PC-3 (cell line): ENCODE measurements at regions of chr4 and their contacts with region 1.

Region 1: GRCh38 chr4:76511947-76512346 is 76.9 kb downstream of the SHROOM3 start:
- DNase-seq: no peak
- ATAC-seq: no peak
- H3K4me3 ChIP-seq: no peak overlapping the region
- H3K27ac ChIP-seq: no peak overlapping the region
- H3K4me1 ChIP-seq: peaks cover 5% of the 10 kb centered on the region; the same call in 1 of the 2 replicates
- H3K27me3 ChIP-seq: no peaks in the 10 kb centered on the region
- CTCF ChIP-seq: no peak

Region 2: GRCh38 chr4:76550966-76551780 is 39.2 kb after region 1 on chr4:
- CTCF ChIA-PET with region 1: no interaction called
- POLR2A ChIA-PET with region 1: no interaction called
- intact Hi-C with region 1: loop called (anchors 2 kb)
- DNase-seq: peak; percentile 70
- ATAC-seq: peak; percentile 61
- H3K4me3 ChIP-seq: no peak overlapping the region
- H3K27ac ChIP-seq: peak overlapping the region; percentile 69
- H3K4me1 ChIP-seq: peaks cover 23% of the 10 kb centered on the region
- H3K27me3 ChIP-seq: no peaks in the 10 kb centered on the region
- CTCF ChIP-seq: no peak

Region 3: DNA sequence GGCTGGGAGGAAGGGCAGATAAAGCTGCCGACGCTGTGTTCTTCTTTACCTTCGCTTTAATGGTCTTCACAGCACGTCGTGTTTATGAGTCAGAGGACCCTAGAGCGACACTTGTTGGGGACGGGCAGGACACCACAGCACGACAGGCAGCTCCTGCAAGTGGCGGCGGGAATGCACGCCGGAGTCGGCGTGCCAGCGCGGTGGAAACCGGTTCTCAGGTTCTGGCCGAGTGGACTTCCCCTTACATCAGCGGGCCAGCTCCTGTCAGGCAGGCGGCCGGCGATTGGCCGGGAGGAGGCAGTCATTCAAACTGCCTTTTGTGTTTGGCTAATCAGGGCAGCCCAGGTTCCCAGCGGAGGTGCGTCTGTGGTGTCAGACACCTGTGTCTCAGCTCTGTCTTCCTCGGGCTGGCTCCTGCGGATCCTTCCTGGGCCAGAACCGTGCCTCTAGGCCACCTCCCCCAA is 74.0 kb after region 1 on chr4:
- CTCF ChIA-PET with region 1: no interaction called
- POLR2A ChIA-PET with region 1: interaction called, 3 read pairs
- intact Hi-C with region 1: loop called (anchors 5 kb)
- DNase-seq: peak; percentile 89
- ATAC-seq: peak; percentile 96
- H3K4me3 ChIP-seq: peak overlapping the region; percentile 76
- H3K27ac ChIP-seq: peak overlapping the region; percentile 45
- H3K4me1 ChIP-seq: peaks cover 38% of the 10 kb centered on the region
- H3K27me3 ChIP-seq: no peaks in the 10 kb centered on the region
- CTCF ChIP-seq: 0 out of 2 replicates have a peak, but pooled peaks have one; percentile 18

Region 4: GRCh38 chr4:76658231-76659102 is 146.5 kb after region 1 on chr4:
- CTCF ChIA-PET with region 1: no interaction called
- POLR2A ChIA-PET with region 1: no interaction called
- intact Hi-C with region 1: loop called (anchors 5 kb)
- DNase-seq: peak; percentile 79
- ATAC-seq: peak; percentile 82
- H3K4me3 ChIP-seq: no peak overlapping the region
- H3K27ac ChIP-seq: peak overlapping the region; percentile 81
- H3K4me1 ChIP-seq: peaks cover 30% of the 10 kb centered on the region
- H3K27me3 ChIP-seq: no peaks in the 10 kb centered on the region
- CTCF ChIP-seq: no peak

Region 5: GRCh38 chr4:76733068-76733771 is 221.3 kb after region 1 on chr4:
- CTCF ChIA-PET with region 1: no interaction called
- POLR2A ChIA-PET with region 1: no interaction called
- intact Hi-C with region 1: loop called (anchors 1 kb)
- DNase-seq: peak; percentile 70
- ATAC-seq: peak; percentile 78
- H3K4me3 ChIP-seq: no peak overlapping the region
- H3K27ac ChIP-seq: no peak overlapping the region; the same call in 1 of the 2 replicates
- H3K4me1 ChIP-seq: peaks cover 6% of the 10 kb centered on the region; the same call in 1 of the 2 replicates
- H3K27me3 ChIP-seq: no peaks in the 10 kb centered on the region
- CTCF ChIP-seq: peak; percentile 80

Region 6: GRCh38 chr4:76748649-76749048 is 236.7 kb after region 1 on chr4:
- CTCF ChIA-PET with region 1: no interaction called
- POLR2A ChIA-PET with region 1: no interaction called
- intact Hi-C with region 1: loop called (anchors 1 kb)
- DNase-seq: peak; percentile 49
- ATAC-seq: no peak
- H3K4me3 ChIP-seq: no peak overlapping the region
- H3K27ac ChIP-seq: no peak overlapping the region
- H3K4me1 ChIP-seq: peaks cover 23% of the 10 kb centered on the region
- H3K27me3 ChIP-seq: no peaks in the 10 kb centered on the region
- CTCF ChIP-seq: peak; percentile 58